ENCODE measurements at regions of chr12 and their contacts with region 1.

Region 1: DNA sequence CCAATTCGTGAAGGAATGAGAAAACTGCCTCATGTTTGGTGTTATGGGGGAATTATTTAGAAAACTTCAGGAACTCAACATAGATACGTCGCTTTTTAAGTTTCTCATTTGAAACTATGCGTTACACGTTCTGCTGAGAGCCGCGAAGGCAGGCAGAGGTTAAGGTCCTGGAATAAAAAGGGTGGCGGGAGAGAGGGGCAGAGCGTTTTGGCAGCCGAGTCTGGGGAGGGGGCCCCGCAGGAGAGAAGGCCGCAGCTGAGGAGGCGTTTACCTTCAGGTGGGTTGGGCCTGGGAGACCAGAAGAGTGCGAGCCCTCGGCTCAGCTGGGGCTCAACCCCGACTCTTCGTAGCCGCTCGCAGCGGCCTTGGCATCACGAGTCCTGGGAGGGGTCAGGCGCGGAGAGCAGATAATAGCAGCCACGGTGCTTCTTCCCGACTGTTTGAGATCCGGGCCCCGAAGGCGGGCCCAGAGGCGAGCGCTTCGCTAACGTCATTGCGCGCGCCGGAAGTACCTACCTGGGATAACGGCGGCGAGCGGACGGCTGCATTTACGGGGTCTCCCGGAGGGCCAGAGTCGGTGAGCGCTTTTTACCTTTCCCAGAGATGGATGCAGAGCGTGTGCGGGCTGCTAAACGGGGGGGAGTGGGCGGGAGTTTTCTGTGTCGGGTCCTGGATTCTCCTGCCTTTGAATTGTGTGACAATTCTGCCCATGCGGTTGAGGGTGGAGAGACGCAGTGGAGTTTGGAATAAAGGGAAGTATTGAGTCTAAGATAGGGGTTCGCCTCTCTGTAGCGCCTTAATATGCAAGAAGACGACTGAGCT is at the starts of genes PPHLN1 and ZCRB1:
- DNase-seq: peak; percentile 86
- H3K4me3 Mint-ChIP-seq: peak within 1 kb of the TSS; percentile 91
- H3K27ac Mint-ChIP-seq: peak within 1 kb of the TSS; percentile 91
- H3K4me1 Mint-ChIP-seq: peaks cover 39% of the 10 kb centered on the region
- H3K27me3 Mint-ChIP-seq: no peaks in the 10 kb centered on the region
- total RNA-seq, gene PPHLN1: 79.9 to 81.3 TPM
- total RNA-seq, gene ZCRB1: 80.1 to 88.1 TPM

Region 2: DNA sequence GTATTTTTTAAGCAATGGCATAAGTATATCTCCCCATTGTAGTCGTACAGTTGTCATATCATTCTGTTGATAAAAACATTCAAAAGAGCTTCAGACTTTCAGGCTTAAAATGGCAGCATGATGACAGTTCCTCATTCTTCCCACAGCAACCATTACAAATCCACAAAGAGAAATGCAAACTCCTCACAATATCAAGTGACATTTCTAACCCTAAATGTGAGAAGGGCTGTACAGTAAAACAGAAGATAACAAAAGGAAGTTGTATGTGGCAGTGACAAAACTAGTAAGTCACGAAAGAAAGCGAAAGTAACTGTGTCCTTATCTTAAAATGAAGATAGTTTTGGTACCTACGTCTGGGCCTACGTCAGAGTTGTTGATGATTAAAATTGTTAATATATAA is 227.9 kb before region 1 on chr12:
- CTCF ChIA-PET with region 1: no interaction called
- POLR2A ChIA-PET with region 1: no interaction called
- intact Hi-C with region 1: loop called (anchors 2 kb)
- DNase-seq: no peak
- H3K4me3 Mint-ChIP-seq: peak overlapping the region; percentile 71
- H3K27ac Mint-ChIP-seq: peak overlapping the region; percentile 85
- H3K4me1 Mint-ChIP-seq: peaks cover 29% of the 10 kb centered on the region
- H3K27me3 Mint-ChIP-seq: no peaks in the 10 kb centered on the region

Region 3: GRCh38 chr12:42144408-42145196 is 181.3 kb before region 1 on chr12 and contains the start of gene GXYLT1:
- CTCF ChIA-PET with region 1: interaction called, 3 read pairs
- POLR2A ChIA-PET with region 1: no interaction called
- intact Hi-C with region 1: loop called (anchors 1 kb)
- DNase-seq: peak; percentile 88
- H3K4me3 Mint-ChIP-seq: peak within 1 kb of the TSS; percentile 93
- H3K27ac Mint-ChIP-seq: peak within 1 kb of the TSS; percentile 75
- H3K4me1 Mint-ChIP-seq: peaks cover 35% of the 10 kb centered on the region
- H3K27me3 Mint-ChIP-seq: no peaks in the 10 kb centered on the region
- total RNA-seq, gene GXYLT1: 7.0 to 8.3 TPM

Region 4: GRCh38 chr12:42261708-42262107 is 64.2 kb before region 1 on chr12:
- CTCF ChIA-PET with region 1: no interaction called
- POLR2A ChIA-PET with region 1: no interaction called
- intact Hi-C with region 1: no loop called
- DNase-seq: peak; percentile 15
- H3K4me3 Mint-ChIP-seq: no peak overlapping the region
- H3K27ac Mint-ChIP-seq: no peak overlapping the region
- H3K4me1 Mint-ChIP-seq: peaks cover 4% of the 10 kb centered on the region
- H3K27me3 Mint-ChIP-seq: no peaks in the 10 kb centered on the region

Region 5: DNA sequence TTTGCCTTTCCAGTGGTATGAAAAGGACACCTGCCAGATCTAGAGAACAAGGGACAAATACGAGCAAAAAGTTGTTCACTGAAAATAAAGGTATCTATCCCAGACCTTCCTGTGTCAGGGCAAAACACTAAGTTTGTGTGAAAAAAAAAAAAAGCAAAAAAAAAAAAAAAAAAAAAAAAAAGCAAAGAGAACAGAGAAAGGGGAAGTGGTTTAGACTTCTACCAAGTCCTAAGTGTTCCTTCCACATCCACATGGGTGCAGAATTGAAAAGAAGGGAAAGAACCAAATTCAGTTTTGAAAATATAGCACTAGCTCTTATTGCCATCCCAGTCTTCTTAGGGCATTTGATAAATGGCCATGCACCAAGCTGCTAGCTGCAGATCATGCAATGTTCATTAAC is 41.7 kb before region 1 on chr12:
- CTCF ChIA-PET with region 1: no interaction called
- POLR2A ChIA-PET with region 1: no interaction called
- intact Hi-C with region 1: no loop called
- DNase-seq: no peak
- H3K4me3 Mint-ChIP-seq: no peak overlapping the region
- H3K27ac Mint-ChIP-seq: no peak overlapping the region
- H3K4me1 Mint-ChIP-seq: peaks cover 2% of the 10 kb centered on the region
- H3K27me3 Mint-ChIP-seq: peaks cover 4% of the 10 kb centered on the region

Region 6: GRCh38 chr12:42299392-42300308 is 26.2 kb before region 1 on chr12:
- CTCF ChIA-PET with region 1: interaction called, 4 read pairs
- POLR2A ChIA-PET with region 1: interaction called, 7 read pairs
- intact Hi-C with region 1: loop called (anchors 1 kb)
- DNase-seq: peak; percentile 89
- H3K4me3 Mint-ChIP-seq: peak overlapping the region; percentile 71
- H3K27ac Mint-ChIP-seq: peak overlapping the region; percentile 88
- H3K4me1 Mint-ChIP-seq: peaks cover 17% of the 10 kb centered on the region
- H3K27me3 Mint-ChIP-seq: no peaks in the 10 kb centered on the region

Region 7: DNA sequence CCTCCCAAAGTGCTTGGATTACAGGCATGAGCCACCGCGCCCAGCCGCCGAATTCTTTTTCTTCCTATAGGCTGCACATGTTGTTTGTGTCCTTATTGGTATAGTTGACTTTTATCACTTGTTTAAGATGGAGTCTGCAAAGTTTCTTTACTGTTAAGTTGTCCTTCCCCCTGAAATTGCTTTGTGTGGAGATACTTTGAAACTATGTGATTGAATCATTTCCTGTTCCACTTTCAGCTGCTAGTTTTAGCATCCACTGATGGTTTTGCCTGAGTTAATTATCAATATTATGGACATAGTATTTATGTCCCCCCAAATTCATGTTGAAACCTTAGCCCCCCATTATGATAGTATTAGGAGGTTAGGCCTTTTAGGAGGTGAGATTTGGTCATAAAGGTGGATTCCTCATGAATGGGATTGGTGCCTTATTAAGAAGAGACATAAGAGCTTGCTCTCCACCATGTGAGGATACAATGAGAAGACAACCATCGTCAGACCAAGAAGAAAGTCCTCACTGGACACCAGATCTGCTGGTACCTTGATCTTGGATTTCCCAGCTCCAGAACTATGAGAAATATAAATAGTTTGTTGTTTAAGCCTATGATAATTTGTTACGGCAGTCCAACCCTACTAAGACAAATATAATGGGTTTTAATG is 35.0 kb after region 1 on chr12:
- CTCF ChIA-PET with region 1: no interaction called
- POLR2A ChIA-PET with region 1: no interaction called
- intact Hi-C with region 1: loop called (anchors 5 kb)
- DNase-seq: no peak
- H3K4me3 Mint-ChIP-seq: no peak overlapping the region
- H3K27ac Mint-ChIP-seq: peak overlapping the region; percentile 50
- H3K4me1 Mint-ChIP-seq: peaks cover 38% of the 10 kb centered on the region
- H3K27me3 Mint-ChIP-seq: no peaks in the 10 kb centered on the region

Region 8: GRCh38 chr12:42534184-42534838 is 208.4 kb after region 1 on chr12:
- CTCF ChIA-PET with region 1: no interaction called
- POLR2A ChIA-PET with region 1: no interaction called
- intact Hi-C with region 1: no loop called
- DNase-seq: no peak
- H3K4me3 Mint-ChIP-seq: no peak overlapping the region
- H3K27ac Mint-ChIP-seq: no peak overlapping the region
- H3K4me1 Mint-ChIP-seq: no peaks in the 10 kb centered on the region
- H3K27me3 Mint-ChIP-seq: peaks cover 4% of the 10 kb centered on the region

Measured in activated CD4-positive, alpha-beta memory T cell treated with anti-CD3 and anti-CD28 coated beads for 36 hours (primary cell).